Cardiac septum (tissue), 1 donor: ENCODE measurements at regions of chr17 and their contacts with region 1.

Region 1: DNA sequence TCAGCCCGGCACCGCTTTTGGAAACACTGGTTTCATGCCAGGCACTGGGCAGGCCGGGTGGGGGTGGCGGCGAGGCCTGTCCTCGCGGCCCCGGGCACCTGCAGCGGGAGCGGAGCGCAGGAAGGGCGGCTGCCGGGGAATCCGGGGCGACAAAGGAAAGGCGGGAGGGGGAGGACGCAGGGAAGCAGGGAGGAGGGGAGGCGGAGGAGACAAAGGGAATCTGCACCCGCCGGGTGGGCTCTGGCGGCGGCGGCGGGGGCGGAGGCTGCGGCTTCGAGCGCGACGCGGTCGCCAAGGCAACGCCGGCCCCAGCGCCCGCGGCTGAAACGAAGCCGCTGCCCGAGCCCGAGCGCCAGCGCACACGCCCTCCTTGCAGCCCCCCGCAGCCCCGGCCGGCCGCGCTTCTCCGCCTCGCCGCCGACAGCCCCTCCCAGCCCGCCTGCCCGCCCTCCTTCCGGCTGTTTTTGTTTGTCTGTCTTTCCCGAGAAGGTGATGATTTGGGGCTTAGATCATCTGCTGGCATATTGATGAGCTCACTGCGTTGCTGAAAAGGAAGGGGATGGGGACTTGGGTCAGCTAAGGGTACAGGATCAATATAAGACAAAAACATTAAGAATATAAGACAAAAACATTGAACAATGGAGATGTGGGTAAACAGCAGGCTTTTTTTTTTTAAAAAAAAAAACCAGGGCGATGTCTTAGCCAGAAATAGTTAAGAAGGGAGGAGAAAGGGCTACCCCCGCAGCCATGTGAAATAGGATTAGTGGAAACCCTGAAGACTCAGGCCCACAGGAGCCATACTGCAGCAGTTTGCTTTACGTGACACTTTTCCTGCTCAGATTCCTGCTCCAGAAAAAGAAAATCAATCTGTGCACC is 32.7 kb downstream of the CDK5R1 start:
- DNase-seq: peak; percentile 77

Region 2: GRCh38 chr17:32877164-32877764 is 357.8 kb after region 1 on chr17:
- intact Hi-C with region 1: loop called (anchors 10 kb)
- DNase-seq: peak; percentile 95